Activated CD4-positive, alpha-beta memory T cell treated with anti-CD3 and anti-CD28 coated beads for 36 hours (primary cell): ENCODE measurements at regions of chr2 and their contacts with region 1.

Region 1: GRCh38 chr2:68203587-68203986 is 45.9 kb downstream of the PNO1 start:
- DNase-seq: no peak
- H3K4me3 Mint-ChIP-seq: peak overlapping the region; percentile 51
- H3K27ac Mint-ChIP-seq: peak overlapping the region; percentile 84
- H3K4me1 Mint-ChIP-seq: peaks cover 72% of the 10 kb centered on the region
- H3K27me3 Mint-ChIP-seq: no peaks in the 10 kb centered on the region

Region 2: DNA sequence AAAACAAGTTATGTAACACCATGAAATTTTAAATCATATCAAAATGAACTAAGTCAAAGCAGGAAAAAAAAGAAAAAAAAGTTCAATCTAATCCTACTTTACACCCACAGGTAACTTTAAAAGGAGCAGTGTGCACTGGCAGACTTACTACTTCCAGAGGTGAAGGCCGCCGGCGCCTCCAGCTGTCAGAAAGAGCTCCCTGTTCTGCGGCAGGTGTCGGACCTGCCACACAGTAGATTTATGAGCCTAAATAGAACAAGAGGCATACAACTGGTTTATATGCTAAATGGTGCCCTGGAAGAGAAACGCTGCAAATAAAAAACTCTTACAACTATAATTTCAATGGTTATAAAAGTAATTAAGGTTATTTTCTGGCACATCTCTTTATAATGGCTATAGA is 69.0 kb before region 1 on chr2:
- CTCF ChIA-PET with region 1: no interaction called
- POLR2A ChIA-PET with region 1: no interaction called
- intact Hi-C with region 1: no loop called
- DNase-seq: no peak
- H3K4me3 Mint-ChIP-seq: no peak overlapping the region
- H3K27ac Mint-ChIP-seq: no peak overlapping the region
- H3K4me1 Mint-ChIP-seq: no peaks in the 10 kb centered on the region
- H3K27me3 Mint-ChIP-seq: no peaks in the 10 kb centered on the region

Region 3: DNA sequence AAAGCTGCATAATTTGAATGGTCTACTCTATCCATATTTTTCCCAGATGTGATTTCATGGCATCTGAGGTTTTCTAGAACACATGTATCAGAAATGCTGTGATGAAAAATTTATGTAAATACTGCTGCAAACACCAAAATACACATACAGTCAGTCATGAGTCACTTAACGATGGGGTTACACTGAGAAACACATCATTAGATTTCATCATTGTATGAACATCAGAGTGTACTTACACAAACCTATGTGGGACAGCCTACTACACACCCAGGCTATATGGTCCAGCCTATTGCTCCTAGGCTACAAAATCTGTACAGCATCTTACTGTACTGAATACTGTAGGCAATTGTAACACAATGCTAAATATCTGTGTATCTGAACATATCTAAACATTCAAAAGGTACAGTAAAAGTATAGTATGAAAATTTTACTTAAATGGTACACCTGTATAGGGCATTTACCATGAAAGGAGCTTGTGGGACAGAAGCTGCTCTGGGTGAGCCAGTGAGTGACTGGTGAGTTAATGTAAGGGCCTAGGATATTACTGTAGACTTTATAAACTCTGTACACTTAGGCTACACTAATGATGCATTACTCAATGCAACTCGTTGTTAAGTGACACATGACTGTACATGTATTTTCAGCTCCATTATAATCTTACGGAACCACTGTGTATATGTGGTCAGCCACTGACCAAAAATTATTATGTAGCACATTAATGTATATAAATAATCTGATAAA is 12.4 kb before region 1 on chr2:
- CTCF ChIA-PET with region 1: interaction called, 4 read pairs
- POLR2A ChIA-PET with region 1: no interaction called
- intact Hi-C with region 1: loop called (anchors 1 kb)
- DNase-seq: no peak
- H3K4me3 Mint-ChIP-seq: no peak overlapping the region
- H3K27ac Mint-ChIP-seq: peak overlapping the region; percentile 29
- H3K4me1 Mint-ChIP-seq: peaks cover 59% of the 10 kb centered on the region
- H3K27me3 Mint-ChIP-seq: no peaks in the 10 kb centered on the region

Region 4: GRCh38 chr2:68217729-68218128 is 14.1 kb after region 1 on chr2:
- CTCF ChIA-PET with region 1: no interaction called
- POLR2A ChIA-PET with region 1: no interaction called
- intact Hi-C with region 1: loop called (anchors 2 kb)
- DNase-seq: no peak
- H3K4me3 Mint-ChIP-seq: no peak overlapping the region
- H3K27ac Mint-ChIP-seq: no peak overlapping the region
- H3K4me1 Mint-ChIP-seq: peaks cover 73% of the 10 kb centered on the region
- H3K27me3 Mint-ChIP-seq: no peaks in the 10 kb centered on the region